Activated naive CD4-positive, alpha-beta T cell treated with anti-CD3 and anti-CD28 coated beads, Interleukin-2, amount 10 ng/mL, durations not matched to agents 7 days and 5 days (primary cell): ENCODE measurements at regions of chr1 and their contacts with region 1.

Region 1: GRCh38 chr1:36134505-36135329 is 9.7 kb upstream of the COL8A2 start:
- DNase-seq: peak; percentile 57
- H3K4me3 Mint-ChIP-seq: no peak overlapping the region
- H3K27ac Mint-ChIP-seq: no peak overlapping the region
- H3K4me1 Mint-ChIP-seq: peaks cover 8% of the 10 kb centered on the region
- H3K27me3 Mint-ChIP-seq: no peaks in the 10 kb centered on the region

Region 2: DNA sequence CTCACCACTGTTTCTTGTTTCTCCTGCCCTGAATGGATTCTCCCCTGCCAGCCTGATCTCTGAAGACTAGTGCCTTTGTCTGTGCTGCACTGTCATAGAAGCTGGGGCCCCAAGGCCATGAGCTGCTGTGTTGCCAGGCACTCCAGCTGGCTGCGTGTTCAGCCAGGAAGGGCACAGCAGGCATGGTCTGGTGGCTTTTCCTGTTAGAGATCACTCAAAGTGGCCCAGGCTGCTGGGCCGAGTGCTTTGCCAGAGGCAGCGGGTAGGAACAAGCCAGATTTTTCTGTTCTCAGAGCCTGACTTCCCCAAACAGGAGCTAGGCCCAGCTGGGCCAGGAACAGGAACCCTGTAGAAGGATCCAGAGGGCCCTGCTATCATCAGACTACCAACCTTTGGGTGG is 40.8 kb before region 1 on chr1:
- CTCF ChIA-PET with region 1: interaction called, 127 read pairs
- DNase-seq: no peak
- H3K4me3 Mint-ChIP-seq: no peak overlapping the region
- H3K27ac Mint-ChIP-seq: peak overlapping the region; percentile 5
- H3K4me1 Mint-ChIP-seq: peaks cover 21% of the 10 kb centered on the region
- H3K27me3 Mint-ChIP-seq: no peaks in the 10 kb centered on the region

Region 3: DNA sequence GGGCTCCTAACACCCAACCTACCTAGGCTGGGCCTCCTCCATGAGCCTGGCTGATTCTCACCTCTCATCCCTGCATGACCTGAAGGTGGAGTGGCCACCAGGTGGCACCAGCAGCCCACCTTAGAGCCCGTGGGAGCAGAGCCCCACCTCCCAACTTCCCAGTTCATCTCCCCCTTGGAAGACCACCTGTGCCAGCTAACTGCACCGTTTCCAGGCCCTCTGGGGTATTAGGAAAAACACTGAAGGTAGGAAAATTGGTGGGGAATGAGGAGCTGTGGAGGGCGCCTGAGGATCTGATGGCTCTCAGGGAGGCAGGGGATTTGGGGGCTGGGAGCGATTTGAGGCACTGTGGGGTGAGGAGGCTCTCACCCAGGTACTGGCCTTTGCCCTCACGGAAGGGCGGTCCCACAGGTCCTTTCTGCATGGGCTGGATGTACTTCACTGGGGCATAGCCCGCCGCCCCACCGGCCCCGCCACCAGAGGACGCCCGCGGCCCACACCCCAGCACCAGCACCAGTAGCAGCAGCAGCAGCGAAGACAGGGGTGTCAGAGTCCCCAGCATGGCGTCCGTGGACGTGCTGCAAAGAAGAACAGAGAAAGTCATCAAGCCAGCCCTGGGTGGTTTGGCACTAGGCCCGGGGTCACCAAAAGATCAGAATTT is 34.9 kb before region 1 on chr1:
- CTCF ChIA-PET with region 1: interaction called, 127 read pairs
- DNase-seq: peak; percentile 85
- H3K4me3 Mint-ChIP-seq: no peak overlapping the region
- H3K27ac Mint-ChIP-seq: no peak overlapping the region
- H3K4me1 Mint-ChIP-seq: peaks cover 3% of the 10 kb centered on the region
- H3K27me3 Mint-ChIP-seq: peaks cover 9% of the 10 kb centered on the region

Region 4: GRCh38 chr1:36116901-36117300 is 17.8 kb before region 1 on chr1:
- CTCF ChIA-PET with region 1: interaction called, 12 read pairs
- DNase-seq: no peak
- H3K4me3 Mint-ChIP-seq: no peak overlapping the region
- H3K27ac Mint-ChIP-seq: no peak overlapping the region
- H3K4me1 Mint-ChIP-seq: no peaks in the 10 kb centered on the region
- H3K27me3 Mint-ChIP-seq: peaks cover 33% of the 10 kb centered on the region